ENCODE measurements at regions of chr6 and their contacts with region 1.

Region 1: DNA sequence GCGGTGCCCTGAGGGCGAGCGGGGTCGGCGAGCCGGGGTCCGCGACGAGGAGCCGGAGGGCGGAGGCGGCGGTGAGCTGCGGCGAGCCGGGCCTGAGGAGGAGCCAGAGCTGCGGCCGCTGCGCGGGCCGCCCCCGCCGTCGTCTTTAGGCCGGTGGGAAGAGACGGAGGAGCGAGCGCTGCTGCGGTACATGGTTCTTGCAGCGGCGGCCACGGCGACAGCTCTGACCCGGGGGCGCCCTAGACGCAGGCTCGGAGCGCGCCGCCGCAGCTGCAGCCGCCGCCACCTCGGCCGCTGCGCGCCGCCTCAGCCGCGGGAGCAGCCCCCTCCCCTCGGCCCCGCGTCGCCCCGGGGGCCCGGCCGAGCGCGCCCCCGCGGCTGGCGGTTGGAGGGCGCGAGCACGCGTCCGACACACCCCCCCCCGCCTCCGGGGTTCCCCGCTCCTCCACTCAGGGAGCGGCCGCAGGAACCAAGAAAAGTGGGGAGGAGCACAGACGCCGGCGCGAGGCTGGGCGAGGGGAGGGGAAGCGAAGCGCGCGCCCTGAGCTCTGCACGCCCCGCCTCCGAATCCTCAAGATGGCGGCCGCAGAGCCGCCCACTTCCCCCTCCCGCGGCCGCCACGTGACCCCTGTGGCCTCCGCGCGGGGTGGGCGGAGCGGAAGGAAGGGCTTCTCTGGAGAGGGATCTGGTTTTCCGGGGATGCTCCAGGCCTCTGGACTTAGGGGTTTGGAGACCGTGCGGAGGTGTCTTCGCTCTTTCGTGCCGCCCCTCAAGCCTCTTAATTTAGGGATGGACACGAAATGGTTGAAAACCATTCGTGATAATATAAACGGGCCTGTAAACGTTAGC is at the start of gene ZNF318:
- DNase-seq: peak; percentile 97
- H3K4me3 Mint-ChIP-seq: peak within 1 kb of the TSS; percentile 80
- H3K27ac Mint-ChIP-seq: peak within 1 kb of the TSS; percentile 93
- H3K4me1 Mint-ChIP-seq: peaks cover 18% of the 10 kb centered on the region
- H3K27me3 Mint-ChIP-seq: no peaks in the 10 kb centered on the region
- CTCF ChIP-seq: no peak
- total RNA-seq, gene ZNF318: 11.3 and 12.9 TPM in 2 replicates

Region 2: GRCh38 chr6:43228951-43229802 is 140.2 kb before region 1 on chr6 and contains the start of gene DNPH1:
- CTCF ChIA-PET with region 1: no interaction called
- POLR2A ChIA-PET with region 1: interaction called, 11 read pairs
- intact Hi-C with region 1: no loop called
- DNase-seq: peak; percentile 69
- H3K4me3 Mint-ChIP-seq: peak within 1 kb of the TSS; percentile 76
- H3K27ac Mint-ChIP-seq: peak within 1 kb of the TSS; percentile 68
- H3K4me1 Mint-ChIP-seq: no peaks in the 10 kb centered on the region
- H3K27me3 Mint-ChIP-seq: peaks cover 12% of the 10 kb centered on the region
- CTCF ChIP-seq: peak; percentile 89
- total RNA-seq, gene DNPH1: 52.5 and 91.0 TPM in 2 replicates

Region 3: DNA sequence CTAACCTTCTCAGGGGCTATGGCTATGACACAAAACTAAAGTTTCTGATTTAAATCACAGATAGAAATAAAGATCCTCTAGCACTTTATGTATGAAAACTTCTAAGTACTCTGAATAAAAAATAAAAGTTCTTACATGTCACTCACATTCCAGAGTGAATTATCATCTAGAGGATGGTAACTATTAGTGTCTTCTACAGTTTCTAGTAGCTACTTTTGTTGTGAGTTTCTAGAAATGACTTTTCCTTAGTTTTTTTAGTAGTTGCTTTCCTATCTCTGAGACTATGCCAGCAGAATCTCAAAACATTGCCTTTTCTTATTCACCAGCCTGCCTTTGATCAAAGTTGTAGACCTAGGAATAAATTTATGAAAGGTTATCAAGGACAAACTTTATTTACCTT is 10.0 kb before region 1 on chr6:
- CTCF ChIA-PET with region 1: interaction called, 7 read pairs
- POLR2A ChIA-PET with region 1: interaction called, 16 read pairs
- intact Hi-C with region 1: no loop called
- DNase-seq: no peak
- H3K4me3 Mint-ChIP-seq: no peak overlapping the region
- H3K27ac Mint-ChIP-seq: peak overlapping the region; percentile 46
- H3K4me1 Mint-ChIP-seq: no peaks in the 10 kb centered on the region
- H3K27me3 Mint-ChIP-seq: no peaks in the 10 kb centered on the region
- CTCF ChIP-seq: no peak

Region 4: GRCh38 chr6:43386492-43386891 is 17.1 kb after region 1 on chr6:
- CTCF ChIA-PET with region 1: interaction called, 7 read pairs
- POLR2A ChIA-PET with region 1: interaction called, 10 read pairs
- intact Hi-C with region 1: no loop called
- DNase-seq: peak; percentile 29
- H3K4me3 Mint-ChIP-seq: no peak overlapping the region
- H3K27ac Mint-ChIP-seq: no peak overlapping the region
- H3K4me1 Mint-ChIP-seq: peaks cover 13% of the 10 kb centered on the region
- H3K27me3 Mint-ChIP-seq: no peaks in the 10 kb centered on the region
- CTCF ChIP-seq: peak; percentile 35

Region 5: GRCh38 chr6:43427406-43428111 is 58.2 kb after region 1 on chr6 and contains the start of gene ABCC10:
- CTCF ChIA-PET with region 1: interaction called, 4 read pairs
- POLR2A ChIA-PET with region 1: interaction called, 28 read pairs
- intact Hi-C with region 1: no loop called
- DNase-seq: peak; percentile 95
- H3K4me3 Mint-ChIP-seq: peak within 1 kb of the TSS; percentile 87
- H3K27ac Mint-ChIP-seq: peak within 1 kb of the TSS; percentile 63
- H3K4me1 Mint-ChIP-seq: peaks cover 10% of the 10 kb centered on the region
- H3K27me3 Mint-ChIP-seq: no peaks in the 10 kb centered on the region
- CTCF ChIP-seq: no peak
- total RNA-seq, gene ABCC10: 25.6 and 25.9 TPM in 2 replicates

Region 6: GRCh38 chr6:43436577-43437282 is 67.3 kb after region 1 on chr6:
- CTCF ChIA-PET with region 1: no interaction called
- POLR2A ChIA-PET with region 1: interaction called, 17 read pairs
- intact Hi-C with region 1: no loop called
- DNase-seq: peak; percentile 95
- H3K4me3 Mint-ChIP-seq: peak overlapping the region; percentile 5
- H3K27ac Mint-ChIP-seq: peak overlapping the region; percentile 92
- H3K4me1 Mint-ChIP-seq: peaks cover 32% of the 10 kb centered on the region
- H3K27me3 Mint-ChIP-seq: no peaks in the 10 kb centered on the region
- CTCF ChIP-seq: no peak

Region 7: GRCh38 chr6:43454696-43455530 is 85.5 kb after region 1 on chr6:
- CTCF ChIA-PET with region 1: no interaction called
- POLR2A ChIA-PET with region 1: interaction called, 20 read pairs
- intact Hi-C with region 1: no loop called
- DNase-seq: peak; percentile 78
- H3K4me3 Mint-ChIP-seq: peak overlapping the region; percentile 83
- H3K27ac Mint-ChIP-seq: peak overlapping the region; percentile 27
- H3K4me1 Mint-ChIP-seq: peaks cover 15% of the 10 kb centered on the region
- H3K27me3 Mint-ChIP-seq: no peaks in the 10 kb centered on the region
- CTCF ChIP-seq: no peak

Measured in MCF 10A (cell line).